ENCODE measurements at regions of chr22 and their contacts with region 1.

Region 1: GRCh38 chr22:25362215-25362882 is 142.9 kb downstream of the CRYBB2 start:
- DNase-seq: peak; percentile 29 to 63 (median 33)
- H3K4me3 ChIP-seq: no peak overlapping the region
- H3K4me3 Mint-ChIP-seq: no peak overlapping the region
- H3K27ac ChIP-seq: no peak overlapping the region
- H3K27ac Mint-ChIP-seq: peak overlapping the region in 1 of 7 donors; percentile 20
- H3K4me1 ChIP-seq: peaks cover 0 to 9% of the 10 kb centered on the region in 2 donors
- H3K4me1 Mint-ChIP-seq: peaks cover 17% of the 10 kb centered on the region
- H3K27me3 ChIP-seq: no peaks in the 10 kb centered on the region
- H3K27me3 Mint-ChIP-seq: no peaks in the 10 kb centered on the region
- CTCF ChIP-seq: peak; percentile 97

Region 2: GRCh38 chr22:25232301-25232700 is 130.0 kb before region 1 on chr22:
- intact Hi-C with region 1: no loop called
- DNase-seq: no peak
- H3K4me3 ChIP-seq: no peak overlapping the region
- H3K4me3 Mint-ChIP-seq: no peak overlapping the region
- H3K27ac ChIP-seq: no peak overlapping the region
- H3K27ac Mint-ChIP-seq: no peak overlapping the region
- H3K4me1 ChIP-seq: no peaks in the 10 kb centered on the region
- H3K4me1 Mint-ChIP-seq: peaks cover 2% of the 10 kb centered on the region
- H3K27me3 ChIP-seq: peaks cover 0 to 9% of the 10 kb centered on the region in 2 donors
- H3K27me3 Mint-ChIP-seq: peaks cover 11 to 25% (median 24%) of the 10 kb centered on the region in 3 donors
- CTCF ChIP-seq: no peak

Region 3: DNA sequence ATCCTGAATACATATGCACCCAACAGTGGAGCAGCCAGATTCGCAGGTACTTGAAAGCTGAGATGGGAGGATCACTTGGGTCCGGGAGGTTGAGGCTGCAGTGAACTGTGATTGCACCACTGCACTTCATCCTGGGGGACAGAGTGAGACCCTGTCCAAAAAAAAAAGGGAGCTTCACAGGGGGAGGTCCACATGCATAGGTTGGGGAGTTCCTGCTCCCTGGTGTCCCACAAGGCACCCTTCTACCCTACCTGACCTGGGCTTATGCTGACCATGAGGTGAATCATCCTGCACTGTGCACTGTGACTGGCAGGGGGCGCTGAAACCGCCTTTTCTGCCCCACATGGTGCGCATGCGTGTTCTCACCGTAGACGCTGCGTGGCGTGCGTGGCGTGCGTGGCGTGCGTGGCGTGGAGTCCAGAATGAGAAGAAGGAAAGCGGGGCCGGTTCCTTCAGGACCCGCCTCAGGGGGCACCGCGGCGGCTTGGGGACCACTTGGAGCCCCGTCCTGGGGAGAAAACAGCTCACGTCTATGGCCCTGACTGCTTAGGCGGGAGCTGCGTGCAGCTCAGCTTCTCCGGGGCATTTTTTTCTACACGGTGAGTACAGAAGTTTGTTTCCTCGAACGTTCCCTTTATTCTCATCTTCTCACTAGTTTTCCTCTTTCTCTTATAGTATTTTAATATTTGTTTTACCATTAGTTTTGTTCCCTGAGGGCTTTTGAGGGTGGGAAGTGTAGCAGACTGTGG is 85.5 kb after region 1 on chr22:
- intact Hi-C with region 1: loop called in 1 of 2 experiments (anchors 5 kb)
- DNase-seq: peak; percentile 83 to 90 (median 86)
- H3K4me3 ChIP-seq: peak overlapping the region; percentile 74 to 97 (median 81)
- H3K4me3 Mint-ChIP-seq: peak overlapping the region; percentile 93
- H3K27ac ChIP-seq: peak overlapping the region in 1 of 2 donors; percentile 80
- H3K27ac Mint-ChIP-seq: peak overlapping the region; percentile 72 to 92 (median 87)
- H3K4me1 ChIP-seq: peaks cover 14 to 20% of the 10 kb centered on the region in 2 donors
- H3K4me1 Mint-ChIP-seq: peaks cover 37% of the 10 kb centered on the region
- H3K27me3 ChIP-seq: no peaks in the 10 kb centered on the region
- H3K27me3 Mint-ChIP-seq: no peaks in the 10 kb centered on the region
- CTCF ChIP-seq: peak; percentile 88

Measured in CD14-positive monocyte (primary cell).